CD4-positive, alpha-beta T cell (primary cell): ENCODE measurements at regions of chr4 and their contacts with region 1.

Region 1: DNA sequence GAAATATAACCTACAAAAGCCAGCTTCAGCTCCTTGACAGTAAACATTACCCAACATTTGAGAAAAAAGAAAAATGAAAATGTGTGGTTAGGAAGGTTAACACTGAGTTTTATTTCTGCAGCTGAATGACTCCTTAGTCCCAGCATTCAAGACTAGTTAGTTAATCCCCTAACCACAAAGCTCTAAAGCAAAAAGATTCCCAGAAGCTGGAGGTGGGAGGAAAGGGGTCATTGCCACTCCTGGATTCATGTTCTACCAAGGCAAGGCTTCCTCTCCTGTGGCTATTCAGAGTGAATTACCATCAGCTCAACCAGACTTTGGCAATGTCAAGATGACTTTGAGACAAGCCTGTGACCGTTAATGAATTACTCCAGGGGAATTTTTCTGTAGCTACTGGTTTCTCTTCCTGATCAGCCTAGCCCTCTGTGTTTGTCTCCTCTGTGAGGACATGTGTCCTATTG is 63.6 kb downstream of the HADH start:
- DNase-seq: no peak
- ATAC-seq: no peak
- H3K4me3 ChIP-seq: no peak overlapping the region
- H3K4me3 Mint-ChIP-seq: peak overlapping the region; percentile 57
- H3K27ac ChIP-seq: peak overlapping the region in 1 of 2 donors; percentile 61
- H3K27ac Mint-ChIP-seq: peak overlapping the region; percentile 93
- H3K4me1 ChIP-seq: peaks cover 69% of the 10 kb centered on the region
- H3K4me1 Mint-ChIP-seq: peaks cover 97% of the 10 kb centered on the region
- H3K27me3 ChIP-seq: no peaks in the 10 kb centered on the region
- H3K27me3 Mint-ChIP-seq: no peaks in the 10 kb centered on the region
- CTCF ChIP-seq: no peak

Region 2: DNA sequence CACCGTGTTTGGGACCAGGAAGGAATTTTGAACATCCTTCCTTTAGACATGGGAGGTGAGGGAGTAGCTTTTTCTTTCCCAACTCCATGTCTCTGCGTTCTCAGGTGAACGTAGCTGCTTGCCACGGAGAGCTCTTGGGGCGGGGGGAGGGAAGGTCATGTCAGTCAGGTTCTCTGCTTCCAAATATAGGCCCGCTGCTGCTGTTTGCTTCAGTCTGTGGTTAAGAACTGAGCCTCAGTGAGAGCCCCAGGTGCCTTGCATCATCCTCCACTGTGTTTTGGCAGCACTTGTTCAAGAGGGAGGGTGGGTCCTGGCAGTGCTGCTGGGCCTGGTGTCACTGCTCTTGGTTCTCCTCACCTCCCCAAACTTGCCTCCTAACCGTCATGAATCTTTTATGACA is 17.1 kb before region 1 on chr4:
- CTCF ChIA-PET with region 1: interaction called, 26 read pairs
- POLR2A ChIA-PET with region 1: interaction called, 21 read pairs
- intact Hi-C with region 1: loop called in 1 of 2 experiments (anchors 2 kb)
- DNase-seq: peak; percentile 50 to 88 (median 70)
- ATAC-seq: peak; percentile 97
- H3K4me3 ChIP-seq: no peak overlapping the region
- H3K4me3 Mint-ChIP-seq: peak overlapping the region; percentile 70
- H3K27ac ChIP-seq: peak overlapping the region; percentile 37 to 68
- H3K27ac Mint-ChIP-seq: peak overlapping the region; percentile 97
- H3K4me1 ChIP-seq: peaks cover 29% of the 10 kb centered on the region
- H3K4me1 Mint-ChIP-seq: peaks cover 63% of the 10 kb centered on the region
- H3K27me3 ChIP-seq: no peaks in the 10 kb centered on the region
- H3K27me3 Mint-ChIP-seq: no peaks in the 10 kb centered on the region
- CTCF ChIP-seq: no peak

Region 3: GRCh38 chr4:108080747-108081146 is 27.5 kb after region 1 on chr4:
- CTCF ChIA-PET with region 1: interaction called, 4 read pairs
- POLR2A ChIA-PET with region 1: interaction called, 10 read pairs
- intact Hi-C with region 1: no loop called
- DNase-seq: peak; percentile 35 to 77 (median 62)
- ATAC-seq: peak; percentile 84
- H3K4me3 ChIP-seq: no peak overlapping the region
- H3K4me3 Mint-ChIP-seq: peak overlapping the region; percentile 77
- H3K27ac ChIP-seq: peak overlapping the region in 1 of 2 donors; percentile 68
- H3K27ac Mint-ChIP-seq: peak overlapping the region; percentile 95
- H3K4me1 ChIP-seq: peaks cover 14% of the 10 kb centered on the region
- H3K4me1 Mint-ChIP-seq: peaks cover 78% of the 10 kb centered on the region
- H3K27me3 ChIP-seq: no peaks in the 10 kb centered on the region
- H3K27me3 Mint-ChIP-seq: no peaks in the 10 kb centered on the region
- CTCF ChIP-seq: no peak

Region 4: GRCh38 chr4:108303488-108304177 is 250.4 kb after region 1 on chr4:
- CTCF ChIA-PET with region 1: no interaction called
- POLR2A ChIA-PET with region 1: no interaction called
- intact Hi-C with region 1: no loop called
- DNase-seq: no peak
- ATAC-seq: no peak
- H3K4me3 ChIP-seq: no peak overlapping the region
- H3K4me3 Mint-ChIP-seq: no peak overlapping the region
- H3K27ac ChIP-seq: no peak overlapping the region
- H3K27ac Mint-ChIP-seq: no peak overlapping the region
- H3K4me1 ChIP-seq: peaks cover 4% of the 10 kb centered on the region
- H3K4me1 Mint-ChIP-seq: peaks cover 26% of the 10 kb centered on the region
- H3K27me3 ChIP-seq: no peaks in the 10 kb centered on the region
- H3K27me3 Mint-ChIP-seq: no peaks in the 10 kb centered on the region
- CTCF ChIP-seq: no peak